Activated CD4-positive, alpha-beta T cell treated with anti-CD3 and anti-CD28 coated beads, Interleukin-2, amount 10 ng/mL, durations not matched to agents 24 days and 14 days (primary cell): ENCODE measurements at regions of chr22 and their contacts with region 1.

Region 1: DNA sequence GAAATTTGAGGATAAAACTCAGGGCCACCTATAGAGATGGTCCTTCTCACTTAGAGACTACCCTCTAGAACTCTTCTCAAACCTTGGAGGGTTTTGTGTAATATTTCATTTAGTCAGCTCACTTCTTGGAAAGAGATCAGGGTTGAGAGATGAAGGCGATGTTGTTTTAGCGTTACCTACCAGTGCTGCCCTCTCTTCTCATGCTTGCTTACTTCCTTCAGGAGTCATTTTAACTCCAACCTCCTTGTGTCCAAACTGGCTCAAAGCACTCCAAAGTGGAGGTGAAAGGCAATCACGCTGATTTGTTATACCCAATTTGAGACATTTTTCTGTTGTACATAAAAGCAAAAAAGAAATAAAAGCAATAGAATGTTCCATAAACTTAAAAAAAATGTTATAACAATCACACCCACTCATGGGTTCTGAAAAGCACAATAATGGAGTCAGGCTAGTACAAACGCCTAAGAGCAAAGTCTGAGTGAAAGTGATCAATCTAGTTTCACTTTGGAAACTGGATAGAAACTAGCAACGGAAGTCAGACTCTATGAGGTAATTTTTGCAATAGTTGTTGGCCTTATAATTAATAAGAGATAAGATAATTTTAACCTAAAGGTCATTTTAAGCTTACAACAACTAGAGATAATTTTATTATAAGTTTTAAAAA is 117.1 kb downstream of the MRTFA start:
- DNase-seq: peak; percentile 70
- H3K4me3 Mint-ChIP-seq: peak overlapping the region; percentile 74
- H3K27ac Mint-ChIP-seq: peak overlapping the region; percentile 91
- H3K4me1 Mint-ChIP-seq: peaks cover 24% of the 10 kb centered on the region
- H3K27me3 Mint-ChIP-seq: no peaks in the 10 kb centered on the region

Region 2: GRCh38 chr22:40463017-40463631 is 56.3 kb before region 1 on chr22:
- intact Hi-C with region 1: loop called (anchors 2 kb)
- DNase-seq: peak; percentile 85
- H3K4me3 Mint-ChIP-seq: peak overlapping the region; percentile 98
- H3K27ac Mint-ChIP-seq: peak overlapping the region; percentile 97
- H3K4me1 Mint-ChIP-seq: peaks cover 48% of the 10 kb centered on the region
- H3K27me3 Mint-ChIP-seq: no peaks in the 10 kb centered on the region

Region 3: GRCh38 chr22:40578171-40578570 is 58.8 kb after region 1 on chr22:
- intact Hi-C with region 1: loop called (anchors 2 kb)
- DNase-seq: peak; percentile 74
- H3K4me3 Mint-ChIP-seq: peak overlapping the region; percentile 19
- H3K27ac Mint-ChIP-seq: peak overlapping the region; percentile 88
- H3K4me1 Mint-ChIP-seq: peaks cover 18% of the 10 kb centered on the region
- H3K27me3 Mint-ChIP-seq: no peaks in the 10 kb centered on the region